ENCODE measurements at regions of chr19 and their contacts with region 1.

Region 1: DNA sequence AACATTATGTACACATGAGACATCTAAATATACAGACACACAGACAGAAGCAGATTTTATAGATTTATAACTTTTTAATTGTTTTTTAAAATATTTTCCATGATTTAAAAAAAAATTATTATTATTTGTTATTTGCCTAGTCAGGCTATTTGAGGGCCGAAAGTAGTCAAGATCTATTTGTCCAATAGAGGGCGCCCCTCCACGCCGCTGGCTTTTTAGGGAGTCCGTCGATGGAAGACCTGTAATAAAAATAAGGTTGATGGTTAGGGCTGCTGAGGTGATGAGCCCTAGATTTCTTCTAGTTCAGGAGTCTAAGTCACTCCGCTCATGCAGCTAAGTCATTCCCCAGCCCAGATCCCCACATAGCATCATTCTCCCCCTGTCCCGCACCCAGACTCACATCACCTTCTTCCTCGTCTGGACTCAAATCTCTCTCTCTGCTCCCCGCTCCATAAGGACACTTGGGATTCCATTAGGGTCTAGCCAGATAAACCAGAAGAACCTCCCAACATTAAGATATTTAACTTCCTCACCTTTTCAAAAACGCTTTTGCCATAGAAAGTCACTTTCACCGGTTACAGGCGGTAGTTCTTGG is 33.9 kb upstream of the CEACAM21 start:
- DNase-seq: peak; percentile 93
- H3K4me3 Mint-ChIP-seq: peak overlapping the region; percentile 62
- H3K27ac Mint-ChIP-seq: peak overlapping the region; percentile 82
- H3K4me1 Mint-ChIP-seq: peaks cover 61% of the 10 kb centered on the region
- H3K27me3 Mint-ChIP-seq: no peaks in the 10 kb centered on the region

Region 2: GRCh38 chr19:41531438-41532311 is 10.4 kb before region 1 on chr19:
- intact Hi-C with region 1: loop called (anchors 1 kb)
- DNase-seq: peak; percentile 96
- H3K4me3 Mint-ChIP-seq: peak overlapping the region; percentile 84
- H3K27ac Mint-ChIP-seq: peak overlapping the region; percentile 88
- H3K4me1 Mint-ChIP-seq: peaks cover 61% of the 10 kb centered on the region
- H3K27me3 Mint-ChIP-seq: peaks cover 4% of the 10 kb centered on the region

Region 3: DNA sequence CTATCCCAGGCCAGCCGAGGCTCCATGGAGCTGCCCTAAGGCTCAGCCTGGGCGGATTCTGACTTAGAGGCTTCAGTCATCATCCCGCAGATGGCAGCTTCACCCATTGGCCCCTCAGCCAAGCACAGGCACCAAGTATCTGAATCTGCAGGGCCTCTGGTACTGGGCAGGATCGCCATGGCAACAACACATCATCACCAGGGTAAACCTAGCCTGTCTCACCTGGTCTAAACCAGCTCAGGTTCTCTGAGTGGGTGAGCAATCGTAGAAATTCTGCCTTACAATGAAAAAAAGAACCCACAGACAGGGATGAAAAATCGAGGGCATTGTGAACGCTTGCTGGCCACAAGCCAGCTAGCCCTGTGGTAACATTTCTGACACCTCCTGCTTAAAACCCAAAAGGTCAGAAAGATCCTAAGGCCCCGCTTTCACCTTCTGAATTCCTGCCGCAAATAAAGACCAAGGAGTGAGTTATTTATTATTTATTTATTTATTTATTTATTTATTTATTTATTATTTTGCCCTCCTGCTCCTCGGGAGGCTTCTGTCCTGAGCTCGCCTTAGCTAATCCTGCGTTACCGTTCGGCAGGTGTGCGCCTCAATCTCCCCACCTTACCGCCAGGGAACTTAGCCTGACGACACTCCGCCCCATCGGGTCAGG is 21.9 kb after region 1 on chr19:
- intact Hi-C with region 1: loop called (anchors 1 kb)
- DNase-seq: peak; percentile 85
- H3K4me3 Mint-ChIP-seq: peak overlapping the region; percentile 74
- H3K27ac Mint-ChIP-seq: peak overlapping the region; percentile 76
- H3K4me1 Mint-ChIP-seq: peaks cover 57% of the 10 kb centered on the region
- H3K27me3 Mint-ChIP-seq: no peaks in the 10 kb centered on the region

Region 4: GRCh38 chr19:41575998-41576397 is 33.9 kb after region 1 on chr19 and contains the start of gene CEACAM21:
- intact Hi-C with region 1: no loop called
- DNase-seq: peak; percentile 90
- H3K4me3 Mint-ChIP-seq: peak within 1 kb of the TSS; percentile 81
- H3K27ac Mint-ChIP-seq: peak within 1 kb of the TSS; percentile 80
- H3K4me1 Mint-ChIP-seq: peaks cover 22% of the 10 kb centered on the region
- H3K27me3 Mint-ChIP-seq: no peaks in the 10 kb centered on the region
- total RNA-seq, gene CEACAM21: 31.1 and 32.8 TPM in 2 replicates

Region 5: GRCh38 chr19:41597600-41598041 is 55.5 kb after region 1 on chr19:
- intact Hi-C with region 1: loop called (anchors 1 kb)
- DNase-seq: peak; percentile 92
- H3K4me3 Mint-ChIP-seq: peak overlapping the region; percentile 37
- H3K27ac Mint-ChIP-seq: peak overlapping the region; percentile 61
- H3K4me1 Mint-ChIP-seq: peaks cover 12% of the 10 kb centered on the region
- H3K27me3 Mint-ChIP-seq: peaks cover 20% of the 10 kb centered on the region